Activated naive CD4-positive, alpha-beta T cell treated with anti-CD3 and anti-CD28 coated beads for 36 hours (primary cell): ENCODE measurements at regions of chr3 and their contacts with region 1.

Region 1: GRCh38 chr3:4850928-4851265 is 128.3 kb upstream of the BHLHE40 start:
- DNase-seq: peak; percentile 64
- H3K4me3 Mint-ChIP-seq: peak overlapping the region; percentile 38
- H3K27ac Mint-ChIP-seq: peak overlapping the region; percentile 94
- H3K4me1 Mint-ChIP-seq: peaks cover 84% of the 10 kb centered on the region
- H3K27me3 Mint-ChIP-seq: no peaks in the 10 kb centered on the region

Region 2: DNA sequence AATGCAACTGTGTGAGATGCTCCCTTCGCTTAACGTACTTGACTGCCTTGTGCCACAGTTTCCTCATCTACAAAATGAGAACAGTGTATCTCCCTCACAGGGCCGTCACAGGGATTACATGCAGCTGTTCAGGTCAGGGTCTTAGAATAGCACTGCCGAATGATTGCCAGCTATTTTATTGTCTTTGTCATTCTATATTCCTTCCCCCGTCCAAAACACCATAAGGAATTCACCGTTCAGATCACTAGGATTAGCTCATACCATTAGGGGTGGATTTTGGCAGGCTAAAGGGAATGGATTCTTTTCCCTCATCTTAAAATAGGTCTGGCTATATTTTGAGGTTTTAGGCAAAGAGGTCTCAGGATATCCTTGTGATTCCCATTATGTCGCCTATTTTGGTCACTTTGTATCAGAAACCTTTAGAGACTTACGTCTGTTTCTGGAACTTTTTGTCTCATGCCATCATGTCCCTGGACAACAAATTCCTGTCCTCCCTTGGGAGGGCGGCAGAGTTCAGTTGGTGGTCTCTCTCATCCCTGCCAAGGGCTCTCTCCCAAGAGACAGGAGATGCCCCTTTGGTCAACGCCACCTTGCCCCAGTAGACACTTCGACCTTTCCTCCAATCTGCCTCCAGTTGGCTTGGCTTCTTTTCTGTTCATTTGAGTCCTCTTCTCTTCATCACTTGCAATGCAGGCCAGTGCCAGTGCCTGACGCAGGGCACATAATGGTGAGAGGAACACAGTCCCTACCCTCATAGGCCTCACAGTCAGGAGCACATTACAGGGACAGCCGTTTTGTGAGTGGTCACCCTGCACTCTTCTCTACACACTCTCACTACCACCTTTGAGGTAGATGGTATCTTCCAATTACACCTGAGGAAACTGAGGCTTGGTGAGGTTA is 43.3 kb before region 1 on chr3:
- CTCF ChIA-PET with region 1: no interaction called
- intact Hi-C with region 1: loop called (anchors 1 kb)
- DNase-seq: no peak
- H3K4me3 Mint-ChIP-seq: no peak overlapping the region
- H3K27ac Mint-ChIP-seq: no peak overlapping the region
- H3K4me1 Mint-ChIP-seq: peaks cover 28% of the 10 kb centered on the region
- H3K27me3 Mint-ChIP-seq: no peaks in the 10 kb centered on the region

Region 3: DNA sequence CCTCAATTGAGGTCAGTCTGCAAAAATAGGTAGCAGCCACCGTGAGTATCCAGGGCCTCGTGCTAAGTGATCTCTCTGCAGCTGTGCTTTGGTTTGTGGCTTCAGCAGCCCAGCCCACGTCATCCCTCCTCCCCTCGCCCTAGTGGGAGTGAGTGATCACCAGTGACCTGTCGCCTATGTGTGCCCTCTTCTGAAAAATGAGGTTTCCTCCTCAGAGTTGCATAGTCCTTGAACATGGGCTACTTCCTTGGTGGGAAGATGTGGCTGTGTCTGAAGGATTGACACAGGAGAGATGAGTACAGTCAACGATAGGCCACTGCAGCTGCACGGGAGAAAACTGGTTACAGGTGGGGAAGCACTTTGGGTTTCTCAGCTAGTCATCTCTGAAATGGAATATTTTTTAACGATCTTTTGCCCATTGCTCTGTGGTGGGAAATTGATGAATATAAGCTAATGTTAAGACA is 16.5 kb before region 1 on chr3:
- CTCF ChIA-PET with region 1: interaction called, 17 read pairs
- intact Hi-C with region 1: loop called (anchors 1 kb)
- DNase-seq: peak; percentile 84
- H3K4me3 Mint-ChIP-seq: peak overlapping the region; percentile 13
- H3K27ac Mint-ChIP-seq: peak overlapping the region; percentile 93
- H3K4me1 Mint-ChIP-seq: peaks cover 85% of the 10 kb centered on the region
- H3K27me3 Mint-ChIP-seq: no peaks in the 10 kb centered on the region

Region 4: GRCh38 chr3:4898454-4899313 is 47.8 kb after region 1 on chr3:
- CTCF ChIA-PET with region 1: interaction called, 10 read pairs
- intact Hi-C with region 1: no loop called
- DNase-seq: no peak
- H3K4me3 Mint-ChIP-seq: no peak overlapping the region
- H3K27ac Mint-ChIP-seq: no peak overlapping the region
- H3K4me1 Mint-ChIP-seq: peaks cover 39% of the 10 kb centered on the region
- H3K27me3 Mint-ChIP-seq: no peaks in the 10 kb centered on the region

Region 5: DNA sequence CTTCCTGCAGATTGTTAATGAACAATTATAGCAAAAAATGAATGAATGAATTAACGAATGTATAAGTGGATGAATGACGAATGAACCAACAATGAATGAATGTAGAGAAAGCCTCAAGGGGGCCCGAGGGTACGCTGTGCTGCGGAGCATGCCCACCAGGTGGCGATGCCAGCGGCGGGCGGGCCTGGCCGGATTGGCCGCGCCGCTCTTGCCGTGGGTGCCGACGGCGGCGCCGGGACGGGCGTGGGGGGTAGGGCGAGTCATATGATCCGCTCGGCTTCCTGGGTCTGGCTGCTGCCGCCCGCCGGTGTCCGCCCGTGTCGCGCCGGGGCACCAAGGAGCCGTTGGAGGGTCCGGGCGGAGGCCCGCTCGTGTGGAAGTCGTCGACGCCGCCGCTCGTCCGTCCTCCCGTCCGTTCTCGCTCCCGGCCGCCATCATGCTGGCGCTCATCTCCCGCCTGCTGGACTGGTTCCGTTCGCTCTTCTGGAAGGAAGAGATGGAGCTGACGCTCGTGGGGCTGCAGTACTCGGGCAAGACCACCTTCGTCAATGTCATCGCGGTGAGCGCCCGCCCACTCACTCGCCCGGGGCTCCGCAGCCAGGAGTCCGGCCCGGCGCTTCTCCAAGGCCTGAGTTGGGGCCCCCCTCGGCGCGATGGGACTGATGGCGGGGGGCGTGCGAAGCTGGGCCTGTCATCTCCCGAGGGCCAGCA is 271.3 kb after region 1 on chr3 and contains the start of gene ARL8B:
- CTCF ChIA-PET with region 1: no interaction called
- intact Hi-C with region 1: loop called (anchors 5 kb)
- DNase-seq: peak; percentile 94
- H3K4me3 Mint-ChIP-seq: peak within 1 kb of the TSS; percentile 90
- H3K27ac Mint-ChIP-seq: peak within 1 kb of the TSS; percentile 90
- H3K4me1 Mint-ChIP-seq: peaks cover 39% of the 10 kb centered on the region
- H3K27me3 Mint-ChIP-seq: no peaks in the 10 kb centered on the region
- total RNA-seq, gene ARL8B: 38.4 to 39.3 TPM